Activated T-helper 2 cell treated with anti-CD3 and anti-CD28 coated beads, Interferon-gamma antibody, Interleukin-2, Interleukin-4, amounts not matched to agents 10 μg/mL and 5 μg/mL and 100 μg/mL, durations not matched to agents 14 hours and 24 hours and 36 hours (primary cell): ENCODE measurements at regions of chr12 and their contacts with region 1.

Region 1: DNA sequence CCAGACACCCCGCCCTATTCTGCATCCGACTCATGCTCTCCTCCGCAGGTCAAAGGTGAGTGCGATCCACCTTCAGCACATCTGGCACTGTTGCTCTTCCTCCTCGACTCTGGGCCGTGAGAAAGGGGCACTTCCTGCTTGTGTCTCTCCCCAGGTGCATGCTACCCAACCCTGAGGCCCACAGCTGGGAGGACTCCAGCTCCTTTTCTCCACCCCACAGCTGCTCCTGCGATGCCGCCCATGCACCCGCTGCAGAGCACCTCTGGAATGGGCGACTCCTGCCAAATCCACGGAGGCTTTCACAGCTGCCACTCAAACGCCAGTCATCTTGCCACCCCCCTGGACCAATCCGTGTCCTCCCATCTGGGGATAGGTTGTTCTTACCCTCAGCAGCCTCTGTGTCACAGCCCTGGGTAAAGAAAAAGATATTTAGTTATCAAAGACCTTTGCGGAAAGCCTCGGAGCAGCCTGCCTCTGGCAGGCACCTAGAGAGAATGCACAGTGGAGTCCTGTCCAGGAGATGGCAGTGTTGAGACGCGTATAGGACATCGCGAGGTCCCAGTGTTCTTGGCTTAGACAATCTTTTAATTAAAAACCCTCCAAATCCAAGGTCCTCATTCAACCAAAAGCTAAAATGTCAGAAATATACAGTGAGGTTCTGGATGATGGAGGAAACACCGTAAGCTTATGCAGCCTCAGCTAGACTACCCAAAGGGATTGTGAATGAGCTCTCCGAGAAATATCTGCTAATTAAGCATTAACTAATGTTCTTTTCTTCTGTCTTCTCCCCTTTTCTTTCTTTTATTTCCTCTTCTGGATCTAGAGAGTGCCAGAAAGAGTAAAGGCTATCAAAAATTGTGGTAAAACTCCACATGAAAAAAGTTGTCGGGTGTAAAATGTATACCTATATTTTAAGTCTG is 54.3 kb downstream of the MYRFL start:
- DNase-seq: peak; percentile 43
- H3K4me3 Mint-ChIP-seq: no peak overlapping the region
- H3K27ac Mint-ChIP-seq: no peak overlapping the region
- H3K4me1 Mint-ChIP-seq: no peaks in the 10 kb centered on the region
- H3K27me3 Mint-ChIP-seq: peaks cover 15% of the 10 kb centered on the region

Region 2: GRCh38 chr12:69662764-69663163 is 216.5 kb before region 1 on chr12:
- intact Hi-C with region 1: no loop called
- DNase-seq: no peak
- H3K4me3 Mint-ChIP-seq: no peak overlapping the region
- H3K27ac Mint-ChIP-seq: no peak overlapping the region
- H3K4me1 Mint-ChIP-seq: no peaks in the 10 kb centered on the region
- H3K27me3 Mint-ChIP-seq: peaks cover 22% of the 10 kb centered on the region

Region 3: DNA sequence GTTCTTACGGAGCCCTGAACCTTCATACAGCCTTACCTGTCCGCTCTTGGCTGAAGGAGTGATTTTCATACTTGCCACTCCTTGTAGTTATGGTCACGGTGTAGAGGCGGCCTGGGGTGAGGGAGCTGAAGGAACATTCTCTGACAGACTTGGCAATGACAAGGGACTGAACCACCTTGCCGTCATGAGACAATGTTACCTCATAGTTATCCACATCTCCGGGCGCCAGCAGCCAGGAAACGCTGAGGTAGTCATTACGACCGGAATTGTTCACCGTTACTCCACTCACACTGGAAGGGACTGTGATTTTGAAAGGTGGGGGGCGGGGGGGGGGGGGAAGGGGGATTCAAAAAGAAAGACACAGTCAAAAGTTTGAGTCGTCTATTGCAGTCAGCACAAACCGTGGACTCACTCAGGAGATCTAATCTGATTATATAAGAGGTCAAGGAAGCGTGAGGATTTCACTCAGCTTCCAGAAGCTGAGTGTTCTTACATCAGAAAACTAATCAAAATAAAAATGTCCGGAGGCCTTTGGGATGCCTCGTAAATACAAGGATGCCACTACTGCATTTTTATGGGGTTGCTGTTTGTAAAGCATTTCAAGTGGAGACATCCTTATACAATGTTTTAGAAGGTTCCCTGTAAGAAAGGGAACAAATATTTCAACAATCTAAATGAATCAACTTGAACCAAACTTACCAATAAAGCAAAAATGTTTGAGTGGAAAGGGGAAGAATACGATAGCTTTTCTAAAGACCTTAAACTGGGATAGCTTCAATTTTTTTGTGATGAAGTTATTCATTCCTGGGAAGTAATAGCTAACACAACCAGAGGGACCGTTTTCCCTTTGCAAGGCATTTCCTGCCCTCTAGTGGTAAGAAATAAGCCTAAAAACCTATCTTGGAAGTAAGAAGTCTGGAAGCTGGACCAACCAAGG is 697.3 kb after region 1 on chr12:
- intact Hi-C with region 1: loop called (anchors 1 kb)
- DNase-seq: no peak
- H3K4me3 Mint-ChIP-seq: no peak overlapping the region
- H3K27ac Mint-ChIP-seq: no peak overlapping the region
- H3K4me1 Mint-ChIP-seq: no peaks in the 10 kb centered on the region
- H3K27me3 Mint-ChIP-seq: peaks cover 3% of the 10 kb centered on the region